ENCODE measurements at regions of chr10 and their contacts with region 1.

Region 1: GRCh38 chr10:119849031-119849789 is 23.4 kb downstream of the MCMBP start:
- DNase-seq: no peak
- H3K4me3 ChIP-seq: no peak overlapping the region
- H3K27ac ChIP-seq: no peak overlapping the region
- H3K4me1 ChIP-seq: no peaks in the 10 kb centered on the region
- H3K27me3 ChIP-seq: no peaks in the 10 kb centered on the region
- CTCF ChIP-seq: no peak
- EP300 ChIP-seq: no peak
- POLR2A ChIP-seq: no peak
- RAD21 ChIP-seq: no peak

Region 2: GRCh38 chr10:119859420-119860258 is 10.4 kb after region 1 on chr10:
- CTCF ChIA-PET with region 1: interaction called, 17 read pairs
- POLR2A ChIA-PET with region 1: interaction called, 3 read pairs
- DNase-seq: no peak
- H3K4me3 ChIP-seq: no peak overlapping the region
- H3K27ac ChIP-seq: no peak overlapping the region
- H3K4me1 ChIP-seq: peaks cover 0 to 6% (median 3%) of the 10 kb centered on the region in 4 experiments; a peak in 4 of 7 replicates
- H3K27me3 ChIP-seq: no peaks in the 10 kb centered on the region
- CTCF ChIP-seq: peak in 2 of 3 experiments; percentile 18 to 43; a peak in 2 of 4 replicates
- EP300 ChIP-seq: no peak
- POLR2A ChIP-seq: no peak
- RAD21 ChIP-seq: peak in 1 of 2 experiments; percentile 55; a peak in 3 of 4 replicates

Region 3: GRCh38 chr10:119878524-119878923 is 29.3 kb after region 1 on chr10:
- CTCF ChIA-PET with region 1: no interaction called
- POLR2A ChIA-PET with region 1: no interaction called
- DNase-seq: no peak
- H3K4me3 ChIP-seq: no peak overlapping the region
- H3K27ac ChIP-seq: no peak overlapping the region
- H3K4me1 ChIP-seq: no peaks in the 10 kb centered on the region
- H3K27me3 ChIP-seq: no peaks in the 10 kb centered on the region
- CTCF ChIP-seq: no peak
- EP300 ChIP-seq: no peak
- POLR2A ChIP-seq: no peak
- RAD21 ChIP-seq: no peak

Region 4: GRCh38 chr10:119903946-119904666 is 54.9 kb after region 1 on chr10:
- CTCF ChIA-PET with region 1: no interaction called
- POLR2A ChIA-PET with region 1: no interaction called
- DNase-seq: no peak
- H3K4me3 ChIP-seq: no peak overlapping the region
- H3K27ac ChIP-seq: no peak overlapping the region
- H3K4me1 ChIP-seq: no peaks in the 10 kb centered on the region
- H3K27me3 ChIP-seq: no peaks in the 10 kb centered on the region
- CTCF ChIP-seq: no peak
- EP300 ChIP-seq: no peak
- POLR2A ChIP-seq: no peak
- RAD21 ChIP-seq: no peak